ENCODE measurements at regions of chr6 and their contacts with region 1.

Region 1: GRCh38 chr6:14066782-14067406 is 50.7 kb upstream of the CD83 start:
- DNase-seq: peak in 2 of 4 donors; percentile 69 to 80
- ATAC-seq: peak; percentile 98
- H3K4me3 ChIP-seq: no peak overlapping the region
- H3K27ac ChIP-seq: no peak overlapping the region
- H3K4me1 ChIP-seq: no peaks in the 10 kb centered on the region
- H3K27me3 ChIP-seq: peaks cover 0 to 9% of the 10 kb centered on the region in 2 donors
- CTCF ChIP-seq: peak; percentile 46 to 61

Region 2: GRCh38 chr6:13795041-13795750 is 271.7 kb before region 1 on chr6:
- intact Hi-C with region 1: loop called in 1 of 2 experiments (anchors 5 kb)
- DNase-seq: peak; percentile 71 to 83 (median 80)
- ATAC-seq: peak; percentile 98
- H3K4me3 ChIP-seq: no peak overlapping the region
- H3K27ac ChIP-seq: no peak overlapping the region
- H3K4me1 ChIP-seq: no peaks in the 10 kb centered on the region
- H3K27me3 ChIP-seq: no peaks in the 10 kb centered on the region
- CTCF ChIP-seq: peak; percentile 92 to 93

Region 3: GRCh38 chr6:13908955-13909381 is 157.9 kb before region 1 on chr6:
- intact Hi-C with region 1: loop called in 1 of 2 experiments (anchors 10 kb)
- DNase-seq: peak in 1 of 4 donors; percentile 75
- ATAC-seq: peak; percentile 97
- H3K4me3 ChIP-seq: no peak overlapping the region
- H3K27ac ChIP-seq: no peak overlapping the region
- H3K4me1 ChIP-seq: no peaks in the 10 kb centered on the region
- H3K27me3 ChIP-seq: peaks cover 0 to 20% of the 10 kb centered on the region in 2 donors
- CTCF ChIP-seq: peak; percentile 32 to 78

Measured in left lung (tissue), 14 donors.